ENCODE measurements at regions of chr7 and their contacts with region 1.

Region 1: GRCh38 chr7:25098096-25099046 is 26.7 kb downstream of the CYCS start:
- DNase-seq: peak; percentile 79
- H3K4me3 ChIP-seq: no peak overlapping the region
- H3K27ac ChIP-seq: no peak overlapping the region
- H3K4me1 ChIP-seq: no peaks in the 10 kb centered on the region
- H3K27me3 ChIP-seq: no peaks in the 10 kb centered on the region
- CTCF ChIP-seq: peak; percentile 95

Region 2: DNA sequence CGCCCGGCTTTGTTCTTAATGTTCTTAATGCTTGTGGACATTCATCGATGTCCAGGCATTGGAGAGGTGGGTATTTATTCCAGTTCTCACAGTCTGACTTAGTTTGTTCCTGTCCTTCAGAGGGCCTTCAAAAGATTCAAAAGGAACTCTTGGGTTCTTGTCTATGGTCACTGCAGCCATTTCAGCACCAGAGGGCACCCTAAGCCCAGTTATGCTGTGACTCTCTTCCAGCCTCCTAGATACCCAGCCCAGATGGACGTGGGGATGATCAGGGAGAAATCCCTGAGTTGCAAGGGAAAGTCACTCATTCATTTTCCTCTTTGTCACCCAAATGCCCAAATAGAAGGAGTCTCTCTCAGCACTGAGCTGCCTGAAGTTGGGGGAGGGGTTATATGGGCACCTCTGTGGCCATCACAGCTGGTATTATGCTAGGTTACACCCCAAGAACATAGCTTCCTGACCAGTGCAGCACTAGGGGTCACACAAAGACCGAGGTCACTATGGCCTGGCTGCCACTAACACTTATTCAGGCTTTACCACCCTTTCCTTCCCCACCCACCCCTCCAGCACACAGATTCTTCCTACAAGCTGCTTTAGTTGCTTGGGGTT is 1527.7 kb before region 1 on chr7:
- CTCF ChIA-PET with region 1: no interaction called
- POLR2A ChIA-PET with region 1: no interaction called
- intact Hi-C with region 1: loop called (anchors 5 kb)
- DNase-seq: peak; percentile 85
- H3K4me3 ChIP-seq: no peak overlapping the region
- H3K27ac ChIP-seq: no peak overlapping the region
- H3K4me1 ChIP-seq: no peaks in the 10 kb centered on the region
- H3K27me3 ChIP-seq: no peaks in the 10 kb centered on the region
- CTCF ChIP-seq: peak; percentile 86

Region 3: DNA sequence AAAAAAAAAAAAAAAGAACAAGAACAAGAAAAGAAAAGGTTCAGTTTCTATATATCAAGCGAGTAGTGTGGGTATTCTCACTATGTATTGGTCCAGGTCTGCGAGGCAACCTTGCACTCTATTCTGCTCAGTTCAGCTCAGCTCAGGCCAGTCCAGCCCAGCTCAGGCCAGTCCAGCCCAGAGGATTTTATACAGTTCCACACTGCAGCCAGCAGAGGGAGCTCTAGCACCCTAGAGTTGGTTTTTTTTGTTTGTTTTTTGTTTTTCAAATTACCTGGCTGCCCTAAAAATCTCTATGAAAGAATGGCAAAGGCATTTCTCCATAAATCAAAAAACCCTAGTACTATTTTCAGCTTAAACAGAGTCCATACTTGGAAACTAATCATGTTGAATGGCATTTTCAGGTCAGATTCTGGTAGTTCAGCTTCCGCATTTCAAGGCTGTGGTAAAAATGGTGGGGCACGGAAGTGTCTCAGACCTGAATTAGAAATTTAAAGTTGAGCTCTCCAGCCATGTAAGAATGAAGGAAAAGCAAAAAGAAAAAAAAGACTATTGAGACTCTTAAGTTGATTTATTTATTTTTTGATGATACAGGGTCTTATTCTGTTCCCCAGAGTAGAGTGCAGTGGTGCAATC is 285.9 kb before region 1 on chr7:
- CTCF ChIA-PET with region 1: interaction called, 19 read pairs
- POLR2A ChIA-PET with region 1: no interaction called
- intact Hi-C with region 1: loop called (anchors 2 kb)
- DNase-seq: peak; percentile 49
- H3K4me3 ChIP-seq: no peak overlapping the region
- H3K27ac ChIP-seq: no peak overlapping the region
- H3K4me1 ChIP-seq: peaks cover 15% of the 10 kb centered on the region
- H3K27me3 ChIP-seq: no peaks in the 10 kb centered on the region
- CTCF ChIP-seq: peak; percentile 93

Measured in A673 (cell line).